Esophagus muscularis mucosa (tissue), 4 donors: ENCODE measurements at regions of chr5 and their contacts with region 1.

Region 1: DNA sequence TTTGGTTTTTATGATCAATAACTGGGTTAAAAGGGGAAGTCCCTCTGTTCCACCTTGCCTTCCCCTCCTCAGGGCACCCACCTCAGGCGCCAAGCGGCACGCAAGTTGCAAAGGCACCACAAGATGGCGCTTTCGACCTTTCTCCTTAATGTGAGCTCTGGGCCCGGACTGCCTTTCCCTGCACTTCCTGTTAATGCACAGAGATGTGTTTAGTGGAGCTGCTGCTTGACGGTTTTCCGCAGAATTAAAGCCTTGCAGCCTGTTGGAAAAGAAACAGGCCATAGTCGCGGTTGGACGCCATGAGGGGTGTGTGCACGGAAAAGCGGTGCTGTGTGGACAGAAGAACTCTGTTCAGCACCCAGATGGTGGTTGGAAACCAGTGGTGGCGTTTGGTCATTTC is 17.9 kb downstream of the CXCL14 start:
- DNase-seq: no peak
- H3K4me3 ChIP-seq: no peak overlapping the region
- H3K27ac ChIP-seq: no peak overlapping the region
- H3K4me1 ChIP-seq: peaks cover 0 to 7% (median 1%) of the 10 kb centered on the region in 4 donors
- H3K27me3 ChIP-seq: peaks cover 0 to 45% (median 2%) of the 10 kb centered on the region in 4 donors
- CTCF ChIP-seq: peak; percentile 68 to 78 (median 69)
- EP300 ChIP-seq: no peak
- POLR2A ChIP-seq: no peak

Region 2: DNA sequence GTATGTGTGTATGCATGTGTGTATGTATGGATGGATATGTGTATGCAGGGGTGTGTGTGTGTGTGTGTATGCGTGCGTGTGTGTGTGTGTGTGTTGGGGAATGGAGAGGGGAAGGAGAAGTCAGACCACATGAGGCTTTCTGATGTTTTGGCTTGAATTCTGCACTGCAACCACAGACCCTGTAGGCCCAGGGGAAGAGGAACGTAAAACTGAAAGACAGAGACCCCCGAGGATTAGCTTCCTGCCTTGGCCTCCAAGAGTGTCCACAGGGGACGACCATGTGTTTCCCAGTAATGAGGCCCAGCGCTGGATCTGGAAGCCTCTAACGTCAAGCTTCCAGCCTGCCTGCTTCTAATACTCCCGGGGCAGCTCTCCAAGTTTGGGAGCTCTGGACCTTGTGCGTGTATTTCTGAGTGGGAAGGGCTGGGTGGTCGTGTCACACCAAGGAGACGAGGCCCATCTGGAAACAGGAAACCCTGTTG is 119.5 kb before region 1 on chr5:
- intact Hi-C with region 1: no loop called
- DNase-seq: no peak
- H3K4me3 ChIP-seq: no peak overlapping the region
- H3K27ac ChIP-seq: no peak overlapping the region
- H3K4me1 ChIP-seq: peaks cover 19 to 25% (median 22%) of the 10 kb centered on the region in 4 donors
- H3K27me3 ChIP-seq: no peaks in the 10 kb centered on the region
- CTCF ChIP-seq: no peak
- EP300 ChIP-seq: no peak
- POLR2A ChIP-seq: no peak

Region 3: DNA sequence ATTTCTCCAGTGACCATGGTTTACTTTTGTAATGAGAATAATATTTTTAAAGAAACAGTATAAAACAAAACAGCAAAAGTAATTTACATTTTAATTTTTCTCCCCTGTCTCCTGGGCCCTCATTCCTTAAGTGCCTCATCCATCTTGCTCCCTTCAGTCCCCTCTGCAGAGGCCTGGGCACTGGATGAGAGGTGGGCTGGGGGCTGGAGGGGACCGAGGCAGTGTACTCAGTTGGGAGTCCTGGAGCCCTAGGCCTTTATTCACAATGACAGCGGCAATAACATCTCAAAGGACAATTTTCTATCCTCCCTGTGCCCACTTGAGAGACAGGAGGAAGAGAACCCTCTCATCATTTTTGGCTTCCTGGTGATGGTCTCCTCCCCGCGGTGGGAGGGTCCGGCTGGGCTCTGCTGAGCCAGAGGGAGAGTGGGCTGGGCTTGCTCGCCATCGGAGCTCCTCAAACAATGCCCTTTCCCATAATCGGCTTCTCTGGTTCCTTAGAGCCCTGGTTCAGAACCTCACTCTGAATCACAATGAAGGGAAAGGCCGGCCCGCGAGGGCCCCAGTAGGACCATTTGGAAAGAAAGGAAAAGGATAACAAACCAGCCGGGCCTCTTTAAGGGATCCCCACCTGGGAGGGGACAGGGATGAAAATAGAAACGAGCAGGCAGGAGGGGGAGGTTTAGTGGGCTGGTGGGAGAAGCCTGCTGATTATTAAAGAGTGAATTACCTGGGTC is 641.8 kb after region 1 on chr5:
- intact Hi-C with region 1: loop called (anchors 10 kb)
- DNase-seq: no peak
- H3K4me3 ChIP-seq: no peak overlapping the region
- H3K27ac ChIP-seq: no peak overlapping the region
- H3K4me1 ChIP-seq: peaks cover 0 to under 1% (median 0%) of the 10 kb centered on the region in 4 donors
- H3K27me3 ChIP-seq: no peaks in the 10 kb centered on the region
- CTCF ChIP-seq: no peak
- EP300 ChIP-seq: no peak
- POLR2A ChIP-seq: no peak